GM10248 (cell line): ENCODE measurements at regions of chr11 and their contacts with region 1.

Region 1: DNA sequence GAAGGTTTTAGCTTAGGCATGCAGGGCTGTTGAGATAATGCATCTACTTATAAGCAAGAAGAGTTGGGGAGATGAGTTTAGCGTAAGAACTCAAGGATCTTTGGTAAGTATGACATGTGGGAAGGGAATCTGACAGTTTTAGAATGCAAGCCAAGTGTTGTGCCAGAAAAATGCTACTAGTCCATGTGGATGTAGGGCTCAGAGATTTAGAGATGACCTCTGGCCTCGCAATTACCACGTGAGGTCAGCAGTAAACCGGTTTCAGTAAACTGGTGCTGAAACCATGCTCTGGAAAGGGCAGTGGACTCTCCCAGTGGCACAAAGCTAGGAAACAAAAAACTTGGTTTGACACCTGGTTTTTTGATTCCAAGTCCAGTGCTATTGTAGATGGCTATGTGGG is 18.9 kb downstream of the MRPL16 start:
- DNase-seq: no peak
- CTCF ChIP-seq: no peak

Region 2: DNA sequence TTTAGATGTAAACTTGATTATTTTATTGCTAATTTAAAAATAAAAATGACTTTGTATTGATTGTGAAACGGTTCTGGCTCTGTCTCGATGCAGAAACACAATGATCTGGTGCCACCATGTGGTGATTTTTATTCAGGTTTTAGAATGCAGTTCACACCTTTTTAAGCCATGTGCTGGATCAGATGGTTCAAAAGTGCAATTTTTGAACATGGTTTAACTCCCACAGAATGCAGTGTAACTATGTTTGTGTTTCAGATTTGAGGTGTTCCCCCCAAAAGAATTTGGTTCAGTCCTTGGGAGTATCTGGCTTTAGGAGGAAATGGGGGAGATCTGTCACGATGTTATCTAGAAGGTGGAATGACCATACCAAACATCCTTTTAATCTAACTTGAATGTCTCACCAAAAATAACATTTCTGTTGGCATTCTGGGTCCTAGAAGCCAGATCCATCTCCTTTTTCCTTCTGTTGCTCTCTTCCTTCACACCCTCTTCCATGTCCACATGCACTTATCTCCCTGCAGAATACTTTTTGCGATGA is 11.1 kb after region 1 on chr11:
- CTCF ChIA-PET with region 1: interaction called, 10 read pairs
- POLR2A ChIA-PET with region 1: no interaction called
- DNase-seq: peak; percentile 31
- CTCF ChIP-seq: peak; percentile 58

Region 3: GRCh38 chr11:59866397-59866796 is 74.8 kb after region 1 on chr11 and contains the start of gene TCN1:
- CTCF ChIA-PET with region 1: no interaction called
- POLR2A ChIA-PET with region 1: no interaction called
- DNase-seq: no peak
- CTCF ChIP-seq: no peak